ENCODE measurements at regions of chr5 and their contacts with region 1.

Region 1: DNA sequence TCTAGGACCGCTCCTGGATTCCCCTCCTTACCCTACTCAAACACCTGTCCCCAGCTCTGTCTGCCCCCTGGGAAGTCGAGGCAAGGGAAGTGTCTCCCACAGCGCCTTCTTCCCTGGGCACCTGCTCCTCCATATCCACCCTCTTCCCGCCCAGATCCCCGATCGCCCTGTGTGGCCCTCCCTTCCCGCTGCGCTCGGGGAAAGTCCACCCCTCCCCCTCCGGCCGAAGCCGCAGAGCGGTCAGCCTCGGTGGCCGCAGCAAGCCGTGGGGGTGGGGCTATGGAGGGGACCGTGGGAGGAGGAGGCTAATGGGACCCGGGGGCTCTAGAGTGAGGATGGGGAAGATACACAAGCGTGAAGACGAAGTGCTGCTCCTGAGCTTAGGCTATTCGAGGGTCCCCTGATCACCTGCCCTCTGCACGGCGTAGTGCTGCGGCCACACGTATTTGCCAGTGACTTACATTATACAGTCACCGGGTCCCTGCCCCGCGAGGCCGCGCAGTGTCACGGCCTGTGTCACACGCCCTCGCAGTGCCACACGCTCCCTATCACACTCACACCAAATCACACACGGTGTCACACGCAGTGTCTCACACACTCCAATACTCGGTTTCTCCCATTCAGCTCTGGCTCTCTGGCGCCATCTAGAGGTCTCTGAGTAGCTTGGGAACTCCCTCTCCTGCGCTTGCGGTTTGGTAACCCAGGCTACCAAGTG is 658 bp upstream of the PCDH1 start:
- DNase-seq: peak; percentile 77 to 96
- ATAC-seq: peak; percentile 76 to 90 (median 84)
- H3K4me3 ChIP-seq: peak overlapping the region; percentile 38 to 92 (median 84)
- H3K27ac ChIP-seq: peak overlapping the region; percentile 77 to 97 (median 93)
- H3K4me1 ChIP-seq: peaks cover 5 to 95% (median 60%) of the 10 kb centered on the region in 9 donors
- H3K27me3 ChIP-seq: peaks cover 8 to 94% (median 60%) of the 10 kb centered on the region in 7 donors
- CTCF ChIP-seq: peak; percentile 96 to 99 (median 98)

Region 2: DNA sequence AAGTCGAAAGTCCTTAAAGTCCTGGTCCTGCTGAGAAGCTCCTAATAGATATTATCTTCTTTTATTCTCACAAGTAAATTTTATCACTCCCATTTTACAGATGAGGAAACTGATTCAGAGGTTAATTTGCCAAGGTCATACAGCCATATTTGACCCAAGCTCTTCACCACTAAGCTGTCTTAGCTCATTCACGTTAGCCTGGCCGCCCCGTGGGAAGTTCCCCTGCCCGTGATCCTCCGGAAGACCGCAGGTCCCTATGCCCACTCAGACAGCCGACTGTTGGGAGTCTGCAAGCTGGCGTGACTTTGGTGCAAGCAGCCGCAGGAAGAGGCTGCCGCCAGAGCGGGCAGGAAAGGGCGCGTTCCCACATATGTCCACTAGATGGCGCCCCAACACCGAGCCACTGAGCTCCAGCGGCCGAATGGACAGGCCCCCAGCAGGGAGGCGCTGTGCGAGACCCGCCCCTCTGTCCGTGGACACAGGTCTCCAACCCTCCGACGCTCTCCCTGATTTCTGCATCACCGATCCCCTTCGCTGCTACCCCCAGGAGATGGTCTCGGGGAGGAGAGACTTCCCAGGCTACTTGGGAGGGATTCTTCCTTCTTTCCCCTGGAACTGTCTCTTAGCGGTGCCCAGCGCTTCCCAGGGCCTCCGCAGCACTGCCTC is 186.9 kb before region 1 on chr5:
- intact Hi-C with region 1: loop called in 1 of 10 experiments (anchors 2 kb)
- DNase-seq: peak; percentile 85 to 90
- ATAC-seq: peak; percentile 83 to 96 (median 90)
- H3K4me3 ChIP-seq: peak overlapping the region in 8 of 10 donors; percentile 18 to 48 (median 40)
- H3K27ac ChIP-seq: peak overlapping the region in 1 of 10 donors; percentile 28
- H3K4me1 ChIP-seq: peaks cover 0 to 39% (median 20%) of the 10 kb centered on the region in 9 donors
- H3K27me3 ChIP-seq: no peaks in the 10 kb centered on the region
- CTCF ChIP-seq: peak; percentile 99 to 100 (median 99)

Region 3: GRCh38 chr5:141805874-141806595 is 72.8 kb before region 1 on chr5:
- intact Hi-C with region 1: loop called in 2 of 10 experiments (anchors 5 kb)
- DNase-seq: peak; percentile 29 to 74
- ATAC-seq: peak; percentile 75 to 93 (median 91)
- H3K4me3 ChIP-seq: no peak overlapping the region
- H3K27ac ChIP-seq: peak overlapping the region; percentile 59 to 93 (median 81)
- H3K4me1 ChIP-seq: peaks cover 16 to 67% (median 48%) of the 10 kb centered on the region in 9 donors
- H3K27me3 ChIP-seq: peaks cover 0 to 56% (median 18%) of the 10 kb centered on the region in 7 donors
- CTCF ChIP-seq: peak in 1 of 9 donors; percentile 31

Region 4: DNA sequence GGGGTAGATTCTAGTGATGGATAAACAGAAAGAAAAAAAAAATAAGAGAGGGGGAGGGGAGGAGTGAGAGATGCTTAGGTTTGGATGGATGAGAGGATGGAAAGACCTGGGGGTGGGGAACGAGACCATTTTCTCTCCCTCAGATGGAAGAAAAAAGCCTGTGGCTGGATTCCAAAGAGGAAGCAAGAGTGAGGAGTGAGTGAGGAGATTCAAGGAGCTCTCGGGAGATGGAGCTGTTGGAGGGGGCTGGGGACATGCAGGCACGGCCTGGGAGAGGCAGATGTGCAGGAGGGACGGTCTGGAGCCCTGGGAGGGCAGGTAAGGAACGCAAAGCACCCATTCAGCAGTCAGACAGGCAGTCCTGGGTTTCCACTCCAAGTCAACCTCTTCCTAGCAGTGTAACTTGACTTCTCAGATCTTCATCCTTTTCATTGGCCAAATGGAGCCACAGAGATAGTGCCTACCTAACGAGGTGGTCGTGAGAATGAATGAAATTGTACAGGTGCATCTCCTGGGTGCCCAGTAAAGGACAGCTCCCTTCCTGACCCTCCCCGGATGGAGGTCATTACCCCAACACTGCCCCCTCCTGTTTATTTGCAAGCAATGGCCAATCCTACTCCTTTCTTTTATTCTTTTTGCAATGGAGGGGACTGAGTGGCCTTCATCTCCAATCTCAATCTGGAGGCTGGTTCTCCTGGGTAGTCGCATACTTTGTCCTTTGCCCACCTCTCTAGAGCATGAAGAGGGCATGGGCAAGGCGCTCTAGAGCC is 52.9 kb before region 1 on chr5:
- intact Hi-C with region 1: no loop called
- DNase-seq: no peak
- ATAC-seq: peak in 1 of 8 donors; percentile 34
- H3K4me3 ChIP-seq: no peak overlapping the region
- H3K27ac ChIP-seq: peak overlapping the region in 9 of 10 donors; percentile 27 to 73 (median 52)
- H3K4me1 ChIP-seq: peaks cover 6 to 52% (median 23%) of the 10 kb centered on the region in 9 donors
- H3K27me3 ChIP-seq: peaks cover 0 to 5% (median 0%) of the 10 kb centered on the region in 7 donors
- CTCF ChIP-seq: peak in 7 of 9 donors; percentile 20 to 57 (median 37)

Region 5: DNA sequence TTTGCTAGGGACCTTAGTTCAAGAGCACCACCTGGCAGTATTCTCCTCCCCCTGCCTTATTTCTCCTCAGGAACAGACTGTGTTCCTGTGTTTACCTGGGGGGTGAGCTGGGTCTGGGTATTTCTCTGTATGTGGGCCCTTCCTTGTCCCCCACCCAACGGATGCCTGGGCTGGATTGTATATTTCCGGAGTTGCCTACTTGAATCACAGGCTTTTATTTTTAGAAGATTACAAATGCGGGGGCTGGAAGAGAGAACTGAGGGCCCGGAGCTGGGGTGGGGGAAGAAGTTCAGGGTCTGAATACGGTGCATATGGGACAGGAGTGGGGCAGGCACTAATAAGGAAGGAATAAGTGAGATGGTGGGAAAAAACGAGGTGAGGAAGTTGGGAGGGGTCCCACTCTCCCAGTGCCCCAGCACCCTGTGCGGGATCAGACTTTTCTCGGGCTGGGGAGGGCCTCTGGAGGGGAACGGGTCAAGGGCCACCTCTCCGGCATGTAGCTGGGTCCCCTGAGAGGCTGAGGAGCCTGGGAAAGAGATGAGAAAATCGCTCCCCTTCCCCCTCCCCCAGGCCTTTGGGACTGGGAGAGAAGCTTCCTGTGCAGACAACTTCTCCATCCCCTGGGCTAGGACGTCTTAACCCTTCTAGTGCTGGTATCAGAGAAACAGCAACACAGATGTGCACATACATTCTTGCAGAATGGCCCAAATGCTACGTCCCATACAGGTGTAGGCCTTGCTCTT is 42.8 kb before region 1 on chr5:
- intact Hi-C with region 1: loop called in 4 of 10 experiments (anchors 5 kb)
- DNase-seq: peak; percentile 69 to 86
- ATAC-seq: peak; percentile 64 to 84 (median 76)
- H3K4me3 ChIP-seq: peak overlapping the region in 7 of 10 donors; percentile 2 to 27 (median 9)
- H3K27ac ChIP-seq: peak overlapping the region; percentile 64 to 91 (median 82)
- H3K4me1 ChIP-seq: peaks cover 12 to 87% (median 64%) of the 10 kb centered on the region in 9 donors
- H3K27me3 ChIP-seq: peaks cover 0 to 19% (median 0%) of the 10 kb centered on the region in 7 donors
- CTCF ChIP-seq: no peak

Region 6: DNA sequence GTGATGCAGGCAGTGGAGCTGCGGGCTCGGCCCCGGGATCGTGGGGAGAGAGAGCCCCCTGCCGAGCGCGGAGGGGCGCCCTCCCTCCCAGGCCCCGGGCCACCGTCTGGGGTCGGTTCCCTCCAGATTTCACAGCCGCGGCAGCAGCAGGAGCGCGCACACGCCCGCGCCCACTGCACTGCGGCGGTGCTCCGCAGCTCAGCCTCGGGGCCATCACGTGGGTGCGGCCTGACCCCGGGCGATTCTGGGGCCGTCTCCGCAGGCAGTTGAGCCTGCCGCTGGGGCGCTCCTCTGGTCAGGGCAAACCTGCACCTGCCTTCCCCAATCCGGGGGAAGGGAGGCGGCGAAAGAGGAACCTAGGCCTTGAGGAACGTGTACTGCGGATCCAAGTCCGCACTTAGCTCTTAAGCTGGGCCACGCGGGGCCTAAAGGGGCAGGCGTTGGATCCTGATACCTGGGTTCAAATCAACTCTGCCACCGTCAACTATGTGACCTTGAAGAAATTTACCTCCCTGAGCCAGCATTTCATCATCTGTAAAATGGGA is 35.4 kb after region 1 on chr5:
- intact Hi-C with region 1: loop called in 2 of 10 experiments (anchors 2 to 5 kb)
- DNase-seq: peak; percentile 25 to 45
- ATAC-seq: peak; percentile 68 to 80 (median 76)
- H3K4me3 ChIP-seq: peak overlapping the region in 9 of 10 donors; percentile 29 to 51 (median 47)
- H3K27ac ChIP-seq: no peak overlapping the region
- H3K4me1 ChIP-seq: peaks cover 0 to 14% (median 11%) of the 10 kb centered on the region in 9 donors
- H3K27me3 ChIP-seq: peaks cover 0 to 24% (median 0%) of the 10 kb centered on the region in 7 donors
- CTCF ChIP-seq: peak; percentile 19 to 75 (median 51)

Region 7: DNA sequence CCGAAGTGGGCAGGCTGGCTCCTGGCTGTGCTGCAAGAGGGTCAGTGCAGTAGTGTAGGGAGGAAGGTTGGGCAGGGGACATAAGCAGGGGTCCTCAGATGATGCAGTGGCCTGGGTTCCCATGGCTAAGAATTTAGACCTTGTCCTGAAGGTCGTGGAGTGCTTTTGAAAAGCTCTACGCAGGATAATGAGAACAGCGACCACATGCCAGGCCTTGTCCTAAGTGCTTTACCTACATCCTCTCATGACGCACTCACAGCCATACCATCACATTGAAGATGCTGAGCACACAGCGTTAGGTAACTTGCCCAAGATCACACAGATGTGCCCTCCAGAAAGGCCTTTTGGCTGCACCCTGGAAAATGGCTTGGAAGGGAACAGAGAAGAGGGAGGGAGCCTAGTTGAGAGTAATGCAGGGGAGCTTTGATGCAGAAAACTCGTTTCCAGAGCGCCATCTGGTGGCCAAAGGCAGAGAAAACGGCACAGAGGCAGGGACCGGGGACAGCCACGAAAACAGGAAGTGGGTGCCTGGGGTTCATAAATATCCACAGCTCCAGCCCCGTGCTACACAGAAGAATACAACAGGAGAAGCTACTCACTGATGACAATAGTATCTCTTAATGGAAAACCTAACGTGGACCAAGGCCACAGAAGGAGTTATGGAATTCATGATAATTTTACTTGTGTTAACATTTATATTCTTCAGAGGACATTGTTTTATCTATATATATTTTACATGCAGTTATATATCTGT is 81.8 kb after region 1 on chr5:
- intact Hi-C with region 1: loop called in 9 of 10 experiments (anchors 2 to 10 kb)
- DNase-seq: peak; percentile 86 to 92
- ATAC-seq: peak; percentile 78 to 87 (median 82)
- H3K4me3 ChIP-seq: no peak overlapping the region
- H3K27ac ChIP-seq: peak overlapping the region in 8 of 10 donors; percentile 36 to 89 (median 82)
- H3K4me1 ChIP-seq: peaks cover 5 to 55% (median 41%) of the 10 kb centered on the region in 9 donors
- H3K27me3 ChIP-seq: no peaks in the 10 kb centered on the region
- CTCF ChIP-seq: peak; percentile 86 to 95 (median 91)

Measured in heart right ventricle (tissue), 16 donors.